PC-9 (cell line): ENCODE measurements at regions of chr4 and their contacts with region 1.

Region 1: DNA sequence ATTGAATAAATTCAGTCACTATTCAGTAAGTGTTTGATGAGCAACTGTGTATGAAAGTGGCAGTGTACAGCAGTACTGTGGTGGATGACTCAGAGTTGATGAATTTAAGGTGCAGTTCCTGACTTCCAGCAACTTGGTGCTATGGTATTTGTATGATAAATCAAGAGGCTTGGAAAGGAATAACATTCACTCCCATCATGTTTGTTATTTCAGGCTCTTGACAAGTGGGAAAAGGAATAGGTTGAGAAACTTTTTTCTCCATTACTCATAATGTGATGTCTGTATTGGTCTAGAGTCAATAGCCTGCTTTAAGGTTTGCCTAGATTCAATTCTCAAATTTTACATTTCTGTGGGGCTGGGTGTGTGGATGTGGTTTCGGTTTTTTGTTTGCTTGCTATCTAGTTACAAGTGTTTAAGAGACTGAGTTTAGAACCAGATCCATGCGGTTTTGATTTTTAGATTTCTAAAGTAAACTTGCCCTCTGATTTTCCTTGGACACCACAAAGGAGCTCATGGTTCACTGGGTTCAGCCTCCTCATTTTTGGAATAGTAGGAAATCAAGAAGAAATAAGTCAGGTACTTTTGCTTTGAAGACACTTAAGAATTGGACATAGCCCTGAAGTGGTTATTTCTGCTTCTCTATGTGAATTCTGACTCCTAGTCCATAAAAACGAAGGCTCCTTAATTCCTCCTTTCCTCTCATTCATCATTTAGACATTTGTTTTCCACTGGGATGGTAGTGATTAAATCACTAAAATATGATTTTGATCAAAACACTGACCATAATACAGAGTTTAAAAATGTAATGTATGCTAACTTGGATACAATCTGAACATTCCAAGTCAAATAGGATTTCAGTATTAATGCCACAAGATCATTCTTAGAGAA is 34.9 kb upstream of the CYP2U1 start:
- DNase-seq: peak; percentile 44 to 97
- H3K4me3 ChIP-seq: peak overlapping the region; percentile 20; the same call in 1 of the 2 replicates
- H3K27ac ChIP-seq: peak overlapping the region; percentile 87
- H3K4me1 ChIP-seq: peaks cover 26% of the 10 kb centered on the region
- H3K27me3 ChIP-seq: no peaks in the 10 kb centered on the region
- CTCF ChIP-seq: no peak

Region 2: DNA sequence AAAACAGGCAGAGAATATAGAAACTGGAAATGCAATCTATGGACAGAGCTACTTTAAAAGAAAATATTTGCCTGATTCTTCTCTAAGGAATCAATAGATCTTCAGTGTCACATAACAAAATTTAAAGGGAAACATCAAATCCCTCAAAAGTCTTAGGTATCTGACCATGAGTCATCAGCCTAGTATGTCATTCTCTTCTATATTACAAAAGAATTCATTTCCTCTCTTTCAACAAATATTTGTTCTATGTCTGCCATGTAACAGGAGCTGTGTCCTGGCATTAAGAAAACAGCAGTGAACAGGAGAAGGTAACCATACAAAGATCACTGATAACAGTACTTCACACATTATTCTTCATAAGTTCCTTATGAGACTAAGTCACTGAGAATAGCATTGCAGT is 616.7 kb before region 1 on chr4:
- CTCF ChIA-PET with region 1: no interaction called
- POLR2A ChIA-PET with region 1: no interaction called
- intact Hi-C with region 1: no loop called
- DNase-seq: peak in 1 of 2 experiments; percentile 56
- H3K4me3 ChIP-seq: no peak overlapping the region
- H3K27ac ChIP-seq: no peak overlapping the region
- H3K4me1 ChIP-seq: no peaks in the 10 kb centered on the region; the same call in 1 of the 2 replicates
- H3K27me3 ChIP-seq: no peaks in the 10 kb centered on the region
- CTCF ChIP-seq: no peak

Region 3: GRCh38 chr4:107863850-107864371 is 32.5 kb before region 1 on chr4:
- CTCF ChIA-PET with region 1: no interaction called
- POLR2A ChIA-PET with region 1: interaction called, 4 read pairs
- intact Hi-C with region 1: loop called (anchors 1 kb)
- DNase-seq: peak; percentile 48 to 50
- H3K4me3 ChIP-seq: no peak overlapping the region
- H3K27ac ChIP-seq: peak overlapping the region; percentile 32
- H3K4me1 ChIP-seq: peaks cover 21% of the 10 kb centered on the region
- H3K27me3 ChIP-seq: no peaks in the 10 kb centered on the region
- CTCF ChIP-seq: no peak

Region 4: GRCh38 chr4:107877346-107877745 is 19.1 kb before region 1 on chr4:
- CTCF ChIA-PET with region 1: interaction called, 3 read pairs
- POLR2A ChIA-PET with region 1: no interaction called
- intact Hi-C with region 1: loop called (anchors 1 kb)
- DNase-seq: peak; percentile 10 to 73
- H3K4me3 ChIP-seq: no peak overlapping the region
- H3K27ac ChIP-seq: no peak overlapping the region
- H3K4me1 ChIP-seq: 0 out of 2 replicates have a peak, but pooled peaks cover 15% of the 10 kb centered on the region
- H3K27me3 ChIP-seq: no peaks in the 10 kb centered on the region
- CTCF ChIP-seq: no peak

Region 5: DNA sequence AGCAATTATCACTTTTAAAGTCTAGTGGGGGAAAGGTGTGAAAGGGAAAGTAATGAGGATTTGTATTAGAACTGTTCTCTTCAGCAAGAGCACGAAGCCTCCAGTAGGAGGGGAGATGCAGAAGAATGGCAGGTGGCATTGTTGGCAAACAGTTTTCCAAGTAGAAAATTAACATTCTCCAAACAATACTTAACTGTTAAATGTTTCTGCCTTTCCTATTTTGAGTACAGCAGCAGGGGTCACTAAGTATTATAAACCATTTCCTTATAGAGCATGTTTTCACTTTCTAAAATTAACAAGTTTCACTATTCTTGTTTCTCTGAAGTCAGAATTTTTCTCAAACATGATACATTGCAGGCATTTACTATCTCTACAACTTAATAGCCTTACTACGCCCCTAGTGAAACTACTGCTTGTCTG is 213.6 kb after region 1 on chr4:
- CTCF ChIA-PET with region 1: no interaction called
- POLR2A ChIA-PET with region 1: no interaction called
- intact Hi-C with region 1: no loop called
- DNase-seq: no peak
- H3K4me3 ChIP-seq: no peak overlapping the region
- H3K27ac ChIP-seq: no peak overlapping the region
- H3K4me1 ChIP-seq: no peaks in the 10 kb centered on the region
- H3K27me3 ChIP-seq: no peaks in the 10 kb centered on the region
- CTCF ChIP-seq: no peak